ENCODE measurements at regions of chr20 and their contacts with region 1.

Region 1: GRCh38 chr20:39264506-39265172 is 302.5 kb downstream of the DHX35 start:
- DNase-seq: peak; percentile 64
- H3K4me3 ChIP-seq: no peak overlapping the region; a peak in 1 of 4 replicates
- H3K27ac ChIP-seq: no peak overlapping the region
- H3K4me1 ChIP-seq: peaks cover 0 to 11% of the 10 kb centered on the region in 2 experiments; a peak in 1 of 4 replicates
- H3K27me3 ChIP-seq: no peaks in the 10 kb centered on the region
- CTCF ChIP-seq: peak; percentile 83
- EP300 ChIP-seq: no peak
- RAD21 ChIP-seq: peak; percentile 67

Region 2: GRCh38 chr20:39019805-39020325 is 244.8 kb before region 1 on chr20:
- CTCF ChIA-PET with region 1: no interaction called
- POLR2A ChIA-PET with region 1: no interaction called
- DNase-seq: no peak
- H3K4me3 ChIP-seq: no peak overlapping the region
- H3K27ac ChIP-seq: no peak overlapping the region
- H3K4me1 ChIP-seq: no peaks in the 10 kb centered on the region
- H3K27me3 ChIP-seq: no peaks in the 10 kb centered on the region
- CTCF ChIP-seq: no peak
- EP300 ChIP-seq: no peak
- RAD21 ChIP-seq: no peak

Region 3: DNA sequence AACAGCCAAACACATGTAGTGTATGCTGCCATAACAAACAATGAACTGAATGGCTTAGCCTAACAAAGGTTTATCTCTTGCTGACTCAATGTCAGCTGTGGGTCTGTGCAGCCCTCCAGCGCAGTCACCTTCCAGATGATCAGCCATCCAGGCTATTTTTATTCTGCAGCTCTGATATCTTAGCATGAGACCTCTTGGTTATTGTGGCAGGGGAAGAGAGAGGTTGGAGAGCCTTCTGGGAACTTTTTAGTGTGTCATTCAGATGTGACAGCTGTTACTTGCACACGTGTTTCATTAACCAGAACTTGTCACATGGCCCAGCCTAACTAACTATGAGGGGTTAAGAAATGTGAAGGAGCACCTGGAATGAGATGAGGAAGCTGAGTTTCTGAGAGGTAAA is 100.0 kb before region 1 on chr20:
- CTCF ChIA-PET with region 1: no interaction called
- POLR2A ChIA-PET with region 1: no interaction called
- DNase-seq: no peak
- H3K4me3 ChIP-seq: no peak overlapping the region
- H3K27ac ChIP-seq: no peak overlapping the region
- H3K4me1 ChIP-seq: no peaks in the 10 kb centered on the region
- H3K27me3 ChIP-seq: no peaks in the 10 kb centered on the region
- CTCF ChIP-seq: no peak
- EP300 ChIP-seq: no peak
- RAD21 ChIP-seq: no peak

Region 4: DNA sequence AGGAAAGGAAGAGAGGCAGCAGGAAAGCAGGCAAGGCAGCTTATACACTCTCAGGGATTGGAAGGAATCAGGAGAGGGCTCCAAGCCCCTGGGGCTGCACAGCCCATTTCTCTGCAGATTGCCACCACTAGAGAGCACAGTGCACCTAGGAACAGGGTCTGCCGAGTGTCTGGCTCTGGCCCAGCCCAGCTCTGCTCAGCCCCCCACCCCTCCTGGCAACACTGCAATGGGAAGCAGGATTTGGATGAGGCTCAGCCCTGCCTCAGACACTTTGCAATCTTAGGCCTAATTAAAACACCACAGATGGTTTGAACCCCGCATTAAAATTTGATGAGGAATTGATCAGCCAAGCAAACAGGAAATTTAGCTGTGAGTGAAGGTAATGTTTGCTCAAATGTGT is 49.8 kb before region 1 on chr20:
- CTCF ChIA-PET with region 1: interaction called, 20 read pairs
- POLR2A ChIA-PET with region 1: no interaction called
- DNase-seq: peak; percentile 42
- H3K4me3 ChIP-seq: no peak overlapping the region
- H3K27ac ChIP-seq: no peak overlapping the region
- H3K4me1 ChIP-seq: peaks cover 0 to 17% of the 10 kb centered on the region in 2 experiments; a peak in 2 of 4 replicates
- H3K27me3 ChIP-seq: no peaks in the 10 kb centered on the region
- CTCF ChIP-seq: no peak
- EP300 ChIP-seq: no peak
- RAD21 ChIP-seq: peak; percentile 57

Region 5: DNA sequence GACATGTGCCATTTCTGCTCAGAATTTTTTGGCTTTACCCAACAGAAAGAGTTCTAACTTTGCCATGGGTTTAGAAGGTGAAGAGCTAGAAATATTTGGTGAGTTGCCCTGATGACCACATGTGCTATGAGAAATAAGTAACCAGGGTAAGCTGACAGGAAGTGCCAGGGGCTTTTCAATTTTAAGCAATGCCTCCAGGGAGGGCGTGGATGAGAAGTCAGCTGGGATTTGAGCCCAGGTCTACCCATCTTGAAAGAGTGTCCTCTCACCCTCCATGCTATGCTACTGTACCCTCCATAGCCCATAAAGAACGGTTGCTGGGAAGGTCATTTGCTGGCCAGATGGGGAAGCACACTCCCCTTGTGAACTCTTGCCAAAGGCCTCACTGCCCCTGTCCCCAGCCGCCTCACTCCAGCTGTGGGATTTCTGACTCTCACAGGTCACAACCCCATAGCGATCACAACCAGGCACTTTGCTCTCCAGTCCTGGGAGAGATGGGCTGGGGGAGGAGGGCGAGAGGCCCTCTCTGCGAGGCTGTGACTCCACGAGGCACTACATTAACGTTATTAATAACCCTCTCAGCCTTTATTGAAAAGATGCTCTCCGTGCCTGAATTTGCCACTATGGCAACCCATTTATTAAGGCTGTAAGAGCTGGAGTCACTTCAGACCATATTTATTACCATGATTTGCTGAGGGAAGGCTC is 11.4 kb before region 1 on chr20:
- CTCF ChIA-PET with region 1: interaction called, 39 read pairs
- POLR2A ChIA-PET with region 1: no interaction called
- DNase-seq: no peak
- H3K4me3 ChIP-seq: no peak overlapping the region
- H3K27ac ChIP-seq: no peak overlapping the region
- H3K4me1 ChIP-seq: peaks cover 0 to 11% of the 10 kb centered on the region in 2 experiments; a peak in 1 of 4 replicates
- H3K27me3 ChIP-seq: no peaks in the 10 kb centered on the region
- CTCF ChIP-seq: no peak
- EP300 ChIP-seq: no peak
- RAD21 ChIP-seq: no peak

Region 6: DNA sequence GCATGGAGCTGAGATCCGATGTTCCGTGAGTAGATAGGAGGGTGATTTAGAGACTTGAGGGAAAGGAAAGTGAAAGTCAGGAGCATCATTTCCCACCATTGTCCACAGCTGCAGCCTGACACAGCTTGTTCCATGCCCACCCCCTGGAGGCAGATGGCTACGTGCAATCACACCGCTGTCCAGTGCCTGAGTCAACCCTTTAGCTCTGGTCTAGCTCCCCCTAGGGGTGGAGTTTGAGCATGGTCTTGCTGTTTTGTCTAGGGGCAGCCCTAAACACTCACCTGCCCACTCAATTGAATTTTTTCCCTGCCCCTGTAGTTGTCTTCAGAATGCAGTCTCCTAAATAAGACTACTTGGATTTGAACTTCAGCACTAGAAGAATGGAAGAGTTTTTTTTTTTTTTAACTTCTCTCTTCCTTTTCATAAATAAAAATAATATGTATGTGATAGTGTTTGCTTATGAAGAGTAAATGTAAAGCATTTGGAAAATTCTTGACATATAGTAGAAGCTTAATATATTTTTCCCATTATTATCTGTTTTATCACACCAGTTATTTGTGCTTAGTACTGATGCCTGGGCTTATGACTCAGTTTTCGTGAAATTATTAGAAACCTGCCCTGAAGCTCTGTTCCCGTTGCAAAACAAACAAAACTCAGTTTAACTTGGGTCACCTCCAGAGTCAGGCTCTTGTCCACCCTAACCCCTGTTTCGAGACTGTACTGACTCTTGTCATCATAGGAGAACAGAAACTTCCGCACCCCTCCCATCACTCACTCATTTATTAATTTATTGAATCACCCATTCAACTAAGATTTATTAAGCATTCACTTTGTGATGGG is 609.6 kb after region 1 on chr20:
- CTCF ChIA-PET with region 1: interaction called, 81 read pairs
- POLR2A ChIA-PET with region 1: interaction called, 3 read pairs
- DNase-seq: peak; percentile 53
- H3K4me3 ChIP-seq: peak overlapping the region in 1 of 2 experiments; percentile 9; a peak in 1 of 4 replicates
- H3K27ac ChIP-seq: no peak overlapping the region
- H3K4me1 ChIP-seq: peaks cover 0 to 12% of the 10 kb centered on the region in 2 experiments; a peak in 2 of 4 replicates
- H3K27me3 ChIP-seq: no peaks in the 10 kb centered on the region
- CTCF ChIP-seq: peak; percentile 75
- EP300 ChIP-seq: no peak
- RAD21 ChIP-seq: peak; percentile 92